ENCODE measurements at regions of chr1 and their contacts with region 1.

Region 1: GRCh38 chr1:107787299-107787698 is 177.7 kb downstream of the VAV3 start:
- DNase-seq: no peak
- H3K4me3 ChIP-seq: no peak overlapping the region
- CTCF ChIP-seq: no peak
- POLR2A ChIP-seq: no peak

Region 2: DNA sequence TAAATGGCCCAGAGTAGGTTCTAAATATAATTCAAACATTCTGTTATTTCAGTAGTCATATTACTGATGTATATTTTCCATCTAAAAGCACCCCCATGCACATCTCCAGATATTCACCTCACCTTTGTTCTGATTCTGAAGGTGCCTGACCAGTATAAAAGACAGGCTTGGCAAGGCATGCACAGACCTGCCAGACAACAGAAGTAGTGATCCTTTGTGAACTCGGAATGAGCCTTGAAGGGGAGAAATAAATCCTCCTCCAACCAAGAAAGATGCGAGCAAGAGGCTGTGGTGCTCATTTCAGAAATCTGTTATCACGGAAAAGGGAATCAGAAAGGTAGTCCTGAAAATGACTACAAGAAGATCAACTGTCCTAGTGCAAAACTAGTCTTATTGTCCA is 109.6 kb before region 1 on chr1:
- intact Hi-C with region 1: no loop called
- DNase-seq: no peak
- H3K4me3 ChIP-seq: no peak overlapping the region
- CTCF ChIP-seq: no peak
- POLR2A ChIP-seq: no peak

Region 3: GRCh38 chr1:107767156-107767582 is 20.1 kb before region 1 on chr1:
- intact Hi-C with region 1: no loop called
- DNase-seq: no peak
- H3K4me3 ChIP-seq: no peak overlapping the region
- CTCF ChIP-seq: no peak
- POLR2A ChIP-seq: no peak

Region 4: DNA sequence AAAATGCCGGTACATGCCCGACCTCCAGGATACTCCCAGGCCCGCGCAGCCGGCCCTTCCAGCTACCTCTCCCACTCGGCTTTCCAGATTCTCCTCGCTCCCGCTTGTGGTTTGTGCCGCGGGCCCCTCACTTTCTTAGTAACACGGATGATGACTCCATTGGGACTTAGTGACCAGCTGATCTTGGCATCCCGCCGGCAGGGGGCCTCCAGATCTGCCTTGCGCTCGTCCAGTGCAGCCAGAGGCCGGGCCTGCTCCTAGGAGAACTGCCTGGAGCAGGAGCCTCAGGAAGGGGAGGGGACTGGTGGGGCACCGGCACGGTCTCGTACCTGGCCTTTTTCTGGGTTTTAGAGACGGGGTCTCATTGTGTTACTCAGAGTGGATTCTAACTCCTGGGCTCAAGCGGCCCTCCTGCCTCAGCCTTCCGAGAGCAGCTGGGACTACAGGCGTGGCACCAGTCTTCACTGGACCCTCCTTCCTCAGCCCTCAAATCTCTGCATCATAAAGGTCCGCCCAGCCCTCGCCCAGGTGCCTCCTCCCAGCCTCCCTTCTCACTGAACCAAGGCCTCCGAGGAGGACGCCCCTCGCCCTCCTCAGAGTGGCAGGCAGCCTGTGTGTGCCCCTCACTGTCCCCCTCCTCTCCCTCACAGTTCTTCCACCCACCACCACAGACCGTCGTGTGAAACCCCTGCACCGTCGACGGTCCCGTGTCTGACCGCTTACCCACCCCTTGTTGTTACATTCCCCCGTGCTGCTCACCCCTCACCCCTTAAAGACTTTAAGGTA is 334.3 kb after region 1 on chr1:
- intact Hi-C with region 1: loop called (anchors 5 kb)
- DNase-seq: no peak
- H3K4me3 ChIP-seq: no peak overlapping the region
- CTCF ChIP-seq: no peak
- POLR2A ChIP-seq: no peak

Measured in lower leg skin (tissue), 4 donors.